GM18951 (cell line): ENCODE measurements at regions of chr4 and their contacts with region 1.

Region 1: GRCh38 chr4:74133786-74134499 is 24.0 kb upstream of the MTHFD2L start:
- POLR2A ChIP-seq: no peak

Region 2: DNA sequence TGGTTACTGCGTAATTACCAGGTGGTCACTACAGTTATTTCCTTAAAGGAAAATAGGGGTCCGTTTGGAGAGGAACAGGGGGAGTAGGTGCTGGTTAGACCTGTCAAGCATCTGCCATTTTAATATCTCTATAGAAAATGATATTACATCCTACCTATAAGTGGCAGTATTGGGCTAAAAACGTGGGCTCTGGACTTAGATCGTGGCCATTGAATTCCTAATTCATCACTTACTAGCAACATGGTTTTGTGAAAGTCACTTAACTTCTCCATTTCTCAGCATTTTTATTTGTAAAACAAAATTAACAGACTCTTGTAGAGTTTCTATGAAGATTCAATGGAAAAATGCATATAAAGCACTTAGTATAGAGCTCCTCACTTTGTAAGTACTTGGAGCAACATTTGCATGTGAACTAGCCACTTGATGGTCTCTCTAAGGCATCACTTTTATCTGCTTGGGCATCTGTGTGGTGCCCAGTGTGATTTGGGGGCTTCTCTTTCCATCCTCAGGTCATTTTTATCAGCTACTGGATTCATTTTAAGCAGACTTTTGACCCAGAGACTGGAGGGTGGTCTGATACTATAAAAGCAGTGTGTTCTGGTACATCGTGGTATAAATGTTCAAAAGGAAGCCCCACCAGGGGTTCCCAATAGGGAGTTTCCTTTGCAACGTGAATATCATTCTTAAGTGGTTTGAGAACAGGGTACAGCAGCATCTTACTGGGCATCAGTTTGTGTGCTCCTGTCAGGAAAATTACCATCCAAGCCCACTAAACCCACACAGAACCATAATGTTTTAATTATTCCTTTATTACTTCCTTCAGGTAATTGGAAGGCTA is 471.0 kb before region 1 on chr4:
- in situ Hi-C with region 1: loop called (anchors 10 kb)
- POLR2A ChIP-seq: no peak